Mammary epithelial cell (primary cell): ENCODE measurements at regions of chr20 and their contacts with region 1.

Region 1: DNA sequence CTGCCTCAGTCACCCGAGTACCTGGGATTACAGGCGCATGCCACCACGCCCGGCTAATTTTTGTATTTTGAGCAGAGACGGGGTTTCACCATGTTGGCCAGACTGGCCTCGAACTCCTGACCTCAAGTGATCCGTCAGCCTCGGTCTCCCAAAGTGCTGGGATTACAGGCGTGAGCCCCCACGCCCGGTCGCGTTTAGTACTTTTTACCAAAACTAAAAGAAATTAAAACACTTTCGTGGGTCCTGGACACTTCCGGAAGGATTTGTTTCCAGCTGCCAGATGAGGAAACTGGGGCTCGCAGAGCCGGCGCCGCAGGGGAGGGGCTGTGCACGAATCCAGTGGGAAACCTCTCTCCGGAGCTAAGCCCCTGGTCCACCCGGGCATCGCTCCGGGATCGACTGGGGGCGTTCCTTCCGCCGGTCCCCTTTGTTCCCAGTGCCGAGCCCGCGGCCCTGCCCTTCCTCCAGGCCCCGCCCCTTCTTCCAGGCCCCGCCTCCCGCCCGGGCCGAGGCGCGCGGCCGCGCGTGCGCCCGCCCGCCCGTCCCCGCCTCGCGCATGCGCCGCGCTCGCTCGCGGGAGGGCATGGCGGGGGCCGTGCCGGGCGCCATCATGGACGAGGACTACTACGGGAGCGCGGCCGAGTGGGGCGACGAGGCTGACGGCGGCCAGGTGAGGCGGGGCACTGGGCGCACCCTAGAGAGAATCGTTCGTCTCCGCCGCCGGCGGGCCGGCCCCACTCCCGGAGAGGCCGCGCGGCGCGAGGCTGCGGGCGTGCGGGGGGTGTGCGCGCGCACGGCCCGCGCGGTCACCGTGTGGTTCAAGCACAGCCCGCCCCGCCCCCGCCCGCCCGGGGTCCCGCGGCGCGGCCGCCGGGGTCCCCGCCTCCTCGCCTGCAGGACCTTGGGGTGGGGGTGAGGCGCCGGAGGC is at the start of gene NELFCD:
- DNase-seq: peak; percentile 74
- H3K4me3 ChIP-seq: peak within 1 kb of the TSS; percentile 73 to 87 (median 83)
- H3K27ac ChIP-seq: peak within 1 kb of the TSS; percentile 56
- H3K4me1 ChIP-seq: peaks cover 4% of the 10 kb centered on the region
- H3K27me3 ChIP-seq: no peaks in the 10 kb centered on the region
- CTCF ChIP-seq: no peak
- total RNA-seq, gene NELFCD: 37.8 to 69.7 TPM

Region 2: DNA sequence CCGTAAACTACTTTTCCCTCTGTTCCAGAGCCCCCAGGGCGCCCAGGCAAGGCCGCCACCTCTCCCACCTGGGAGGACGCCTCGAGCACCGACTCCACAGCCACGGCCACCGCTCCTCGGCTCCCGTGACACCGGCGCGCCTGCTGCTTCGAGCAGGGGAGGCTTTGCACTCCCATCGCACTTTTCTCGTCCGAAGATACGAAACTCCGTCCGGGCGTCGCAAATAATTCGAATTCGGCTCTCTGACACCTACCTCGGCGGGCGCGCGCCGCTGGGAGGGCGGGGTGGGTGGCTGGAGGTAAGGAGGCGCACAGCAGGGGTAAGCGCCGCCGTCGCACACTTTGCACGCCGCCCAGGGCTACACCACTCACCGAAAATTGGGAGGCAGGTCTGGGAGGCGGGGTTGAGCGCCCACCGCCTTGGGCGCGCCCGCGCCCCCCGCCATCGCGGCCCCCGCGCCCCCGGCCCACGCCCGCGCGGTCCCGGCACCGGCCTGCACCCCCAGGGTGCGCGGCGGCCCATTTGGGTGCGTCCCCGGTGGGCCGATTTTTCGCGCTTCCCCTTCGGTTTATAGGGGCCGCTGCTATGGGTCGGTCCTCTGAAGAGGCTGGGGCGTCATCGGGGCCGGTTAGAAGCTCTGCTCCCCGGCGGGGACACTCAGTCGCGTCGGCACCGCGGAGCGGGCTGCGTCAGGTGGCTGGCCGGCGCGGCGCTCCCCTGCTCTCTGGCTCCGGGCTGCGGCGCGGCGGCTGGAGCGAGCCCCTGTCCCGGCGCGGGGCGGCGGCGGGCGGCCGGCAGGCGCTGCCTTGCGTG is 92.2 kb before region 1 on chr20:
- CTCF ChIA-PET with region 1: no interaction called
- dilution Hi-C with region 1: no loop called
- in situ Hi-C with region 1: no loop called
- intact Hi-C with region 1: loop called (anchors 2 kb)
- DNase-seq: peak; percentile 73
- H3K4me3 ChIP-seq: peak overlapping the region; percentile 66 to 89 (median 83)
- H3K27ac ChIP-seq: peak overlapping the region; percentile 59
- H3K4me1 ChIP-seq: peaks cover 10% of the 10 kb centered on the region
- H3K27me3 ChIP-seq: no peaks in the 10 kb centered on the region
- CTCF ChIP-seq: no peak

Region 3: GRCh38 chr20:58907399-58908137 is 73.4 kb before region 1 on chr20:
- CTCF ChIA-PET with region 1: no interaction called
- dilution Hi-C with region 1: no loop called
- in situ Hi-C with region 1: no loop called
- intact Hi-C with region 1: loop called (anchors 5 kb)
- DNase-seq: peak; percentile 83
- H3K4me3 ChIP-seq: no peak overlapping the region
- H3K27ac ChIP-seq: peak overlapping the region; percentile 38
- H3K4me1 ChIP-seq: peaks cover 18% of the 10 kb centered on the region
- H3K27me3 ChIP-seq: no peaks in the 10 kb centered on the region
- CTCF ChIP-seq: no peak

Region 4: GRCh38 chr20:59087829-59088433 is 107.0 kb after region 1 on chr20:
- CTCF ChIA-PET with region 1: no interaction called
- dilution Hi-C with region 1: no loop called
- in situ Hi-C with region 1: no loop called
- intact Hi-C with region 1: no loop called
- DNase-seq: peak; percentile 47
- H3K4me3 ChIP-seq: no peak overlapping the region
- H3K27ac ChIP-seq: no peak overlapping the region
- H3K4me1 ChIP-seq: peaks cover under 1% of the 10 kb centered on the region
- H3K27me3 ChIP-seq: peaks cover 7% of the 10 kb centered on the region
- CTCF ChIP-seq: peak; percentile 89 to 97